ENCODE measurements at regions of chr12 and their contacts with region 1.

Region 1: GRCh38 chr12:98572010-98572409 is 21.5 kb upstream of the SLC25A3 start:
- DNase-seq: no peak
- H3K4me3 ChIP-seq: no peak overlapping the region
- H3K27ac ChIP-seq: no peak overlapping the region
- H3K4me1 ChIP-seq: no peaks in the 10 kb centered on the region
- H3K27me3 ChIP-seq: no peaks in the 10 kb centered on the region
- CTCF ChIP-seq: peak; percentile 32 to 71 (median 54)
- EP300 ChIP-seq: no peak
- POLR2A ChIP-seq: no peak
- RAD21 ChIP-seq: peak; percentile 28 to 39; a peak in 2 of 4 replicates

Region 2: GRCh38 chr12:98550803-98551202 is 21.2 kb before region 1 on chr12:
- CTCF ChIA-PET with region 1: interaction called, 20 read pairs
- POLR2A ChIA-PET with region 1: interaction called, 3 read pairs
- DNase-seq: no peak
- H3K4me3 ChIP-seq: no peak overlapping the region
- H3K27ac ChIP-seq: no peak overlapping the region
- H3K4me1 ChIP-seq: no peaks in the 10 kb centered on the region
- H3K27me3 ChIP-seq: no peaks in the 10 kb centered on the region
- CTCF ChIP-seq: no peak
- EP300 ChIP-seq: no peak
- POLR2A ChIP-seq: no peak
- RAD21 ChIP-seq: no peak

Region 3: DNA sequence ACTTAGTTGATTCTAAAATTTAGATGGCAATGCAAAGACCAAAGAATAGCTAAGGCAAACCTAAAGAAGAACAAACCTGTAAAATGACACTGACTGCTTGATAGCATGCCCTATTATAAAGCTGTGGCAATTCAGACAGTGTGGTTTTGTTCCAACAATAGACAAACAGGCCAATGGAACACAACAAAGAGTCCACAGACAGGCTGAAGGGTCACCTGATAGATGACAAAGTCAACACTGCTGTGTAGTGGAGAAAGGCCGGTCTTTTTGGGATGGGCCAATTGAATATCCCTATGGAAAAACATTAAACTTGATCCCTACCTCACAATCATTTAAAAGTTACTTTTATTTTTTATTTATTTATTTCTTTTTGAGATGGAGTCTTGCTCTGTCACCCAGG is 12.3 kb before region 1 on chr12:
- CTCF ChIA-PET with region 1: interaction called, 15 read pairs
- POLR2A ChIA-PET with region 1: no interaction called
- DNase-seq: no peak
- H3K4me3 ChIP-seq: no peak overlapping the region
- H3K27ac ChIP-seq: no peak overlapping the region
- H3K4me1 ChIP-seq: no peaks in the 10 kb centered on the region
- H3K27me3 ChIP-seq: no peaks in the 10 kb centered on the region
- CTCF ChIP-seq: no peak
- EP300 ChIP-seq: no peak
- POLR2A ChIP-seq: no peak
- RAD21 ChIP-seq: no peak

Region 4: DNA sequence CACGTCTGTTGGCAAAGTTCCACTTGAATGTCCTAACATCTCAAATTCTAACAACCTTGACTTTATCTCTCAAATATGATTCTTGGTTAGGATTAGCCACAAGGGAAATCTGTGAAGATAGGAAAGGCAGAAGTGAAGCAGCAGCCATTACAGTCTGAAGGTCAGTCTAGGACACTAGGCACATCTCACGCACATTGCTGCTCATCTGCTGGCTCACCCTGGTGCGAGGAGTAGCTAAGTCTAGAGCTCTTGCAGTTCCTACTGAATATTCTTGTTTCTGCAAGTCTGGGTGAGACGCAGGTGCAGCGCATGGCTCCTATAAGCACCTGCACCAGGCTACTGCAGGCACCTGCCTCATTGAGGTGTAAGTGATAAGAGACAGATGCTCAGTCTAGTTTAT is 15.1 kb after region 1 on chr12:
- CTCF ChIA-PET with region 1: interaction called, 68 read pairs
- POLR2A ChIA-PET with region 1: no interaction called
- DNase-seq: no peak
- H3K4me3 ChIP-seq: no peak overlapping the region
- H3K27ac ChIP-seq: no peak overlapping the region
- H3K4me1 ChIP-seq: no peaks in the 10 kb centered on the region
- H3K27me3 ChIP-seq: no peaks in the 10 kb centered on the region
- CTCF ChIP-seq: no peak
- EP300 ChIP-seq: no peak
- POLR2A ChIP-seq: no peak
- RAD21 ChIP-seq: no peak

Region 5: DNA sequence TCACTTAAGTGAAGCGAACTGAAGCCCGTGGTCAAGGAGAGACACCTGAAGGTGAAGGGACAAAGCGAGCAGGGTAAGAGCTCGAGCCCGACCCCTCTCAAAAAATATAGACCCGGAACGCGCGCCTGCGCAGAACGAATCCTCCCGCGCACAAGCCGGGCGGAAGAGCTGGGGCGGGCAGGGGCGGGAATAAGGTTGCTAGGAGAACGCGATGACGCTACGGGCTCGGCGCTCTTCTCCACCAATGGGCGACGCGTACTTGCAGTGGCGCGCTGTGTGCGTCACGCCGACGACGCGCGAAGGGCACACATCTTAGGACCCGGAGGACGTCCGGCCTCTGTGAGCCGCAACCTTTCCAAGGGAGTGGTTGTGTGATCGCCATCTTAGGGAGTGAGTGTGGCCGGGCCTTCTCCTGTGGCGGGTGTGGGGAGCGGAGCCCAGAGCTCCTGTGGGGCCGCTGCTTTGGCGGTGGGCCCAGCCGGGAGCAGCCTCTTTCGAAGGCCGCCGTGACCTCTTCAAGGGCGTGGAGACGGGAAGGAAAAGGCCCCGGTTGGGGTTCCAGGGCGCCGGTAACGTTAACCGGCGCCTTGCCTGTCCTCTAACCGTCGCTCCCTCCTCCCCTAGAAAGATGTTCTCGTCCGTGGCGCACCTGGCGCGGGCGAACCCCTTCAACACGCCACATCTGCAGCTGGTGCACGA is 21.5 kb after region 1 on chr12 and contains the start of gene SLC25A3:
- CTCF ChIA-PET with region 1: interaction called, 68 read pairs
- POLR2A ChIA-PET with region 1: interaction called, 19 read pairs
- DNase-seq: peak; percentile 90 to 96
- H3K4me3 ChIP-seq: peak within 1 kb of the TSS; percentile 73 to 99 (median 91)
- H3K27ac ChIP-seq: peak within 1 kb of the TSS; percentile 91
- H3K4me1 ChIP-seq: peaks cover 0 to 9% (median 4%) of the 10 kb centered on the region in 4 experiments; a peak in 2 of 7 replicates
- H3K27me3 ChIP-seq: no peaks in the 10 kb centered on the region
- CTCF ChIP-seq: no peak
- EP300 ChIP-seq: peak in 1 of 2 experiments; percentile 11; a peak in 1 of 3 replicates
- POLR2A ChIP-seq: peak; percentile 99
- RAD21 ChIP-seq: 0 out of 4 replicates have a peak, but pooled peaks of 1 of the 2 experiments have one; percentile 8
- total RNA-seq, gene SLC25A3: 709 and 719 TPM in 2 replicates

Region 6: DNA sequence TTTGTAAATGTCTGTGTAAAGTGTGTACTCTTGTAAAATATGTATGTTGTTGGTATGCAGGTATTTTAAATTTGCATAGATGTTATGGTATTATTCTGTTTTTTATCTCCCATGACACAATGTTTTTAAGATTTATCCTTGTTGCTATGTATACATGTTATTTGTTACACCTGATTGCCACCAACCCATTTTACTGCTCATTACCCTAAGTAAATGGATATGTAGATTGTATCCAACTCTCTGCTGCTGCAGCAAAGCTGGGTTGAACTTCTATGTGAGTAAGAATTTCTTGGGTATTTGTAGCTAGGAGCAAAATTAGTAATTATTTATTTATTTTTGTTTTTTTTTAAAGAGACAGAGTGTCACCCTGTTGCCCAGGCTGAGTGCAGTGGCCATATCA is 79.3 kb after region 1 on chr12:
- CTCF ChIA-PET with region 1: interaction called, 20 read pairs
- POLR2A ChIA-PET with region 1: no interaction called
- DNase-seq: no peak
- H3K4me3 ChIP-seq: no peak overlapping the region
- H3K27ac ChIP-seq: no peak overlapping the region
- H3K4me1 ChIP-seq: no peaks in the 10 kb centered on the region; a peak in 1 of 7 replicates
- H3K27me3 ChIP-seq: no peaks in the 10 kb centered on the region
- CTCF ChIP-seq: no peak
- EP300 ChIP-seq: no peak
- POLR2A ChIP-seq: no peak
- RAD21 ChIP-seq: no peak

Measured in H1 (cell line).